ENCODE measurements at regions of chr20 and their contacts with region 1.

Region 1: DNA sequence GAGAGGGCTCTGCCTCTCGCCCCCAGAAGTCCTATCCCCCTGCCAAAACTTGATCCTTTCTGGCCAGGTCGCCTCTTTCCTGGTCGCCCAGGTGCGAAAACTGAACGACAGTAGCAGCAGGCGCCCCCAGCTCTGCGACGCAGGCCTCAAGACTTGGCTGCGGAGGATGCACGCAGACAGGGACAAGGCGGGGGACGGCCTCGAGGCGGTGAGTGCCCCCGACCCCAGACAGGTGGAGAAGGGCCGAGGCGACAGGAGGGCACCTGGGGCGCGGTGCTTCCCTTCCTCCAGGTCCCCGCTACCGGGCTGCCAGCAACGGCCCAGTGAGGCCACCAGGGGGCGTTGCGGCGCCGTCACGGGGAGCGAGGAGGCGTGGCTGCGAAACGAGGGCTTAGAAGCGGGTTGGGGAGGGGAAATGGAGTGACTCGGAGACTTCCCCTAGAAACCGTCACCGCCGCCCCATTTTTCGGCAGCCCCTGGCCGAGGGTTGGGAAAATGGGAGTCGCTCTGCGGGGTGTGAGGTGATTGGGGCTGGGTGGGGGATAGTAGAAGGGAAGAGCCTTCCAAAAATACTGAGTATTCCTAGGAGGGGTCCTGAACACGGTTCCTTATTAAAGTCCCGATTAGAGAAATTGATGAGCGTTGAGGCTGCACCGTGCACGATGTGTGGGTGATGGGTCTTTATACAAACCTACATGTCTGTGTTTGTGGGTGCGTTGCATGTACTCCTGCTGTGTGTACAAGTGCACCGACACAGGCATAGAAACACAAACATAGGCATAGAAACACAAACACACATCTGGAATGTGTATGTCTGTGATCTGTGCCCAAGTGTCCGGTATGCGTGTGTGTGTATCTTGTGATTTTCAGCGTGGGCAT is 44.6 kb downstream of the ARHGAP40 start:
- DNase-seq: peak; percentile 84 to 91 (median 88)
- H3K4me3 ChIP-seq: peak overlapping the region in 1 of 2 donors; percentile 39
- H3K4me3 Mint-ChIP-seq: peak overlapping the region; percentile 67 to 87 (median 82)
- H3K27ac ChIP-seq: no peak overlapping the region
- H3K27ac Mint-ChIP-seq: peak overlapping the region in 6 of 7 donors; percentile 52 to 88 (median 75)
- H3K4me1 ChIP-seq: peaks cover 11% of the 10 kb centered on the region
- H3K4me1 Mint-ChIP-seq: peaks cover 5 to 8% (median 7%) of the 10 kb centered on the region in 4 donors
- H3K27me3 ChIP-seq: peaks cover 9% of the 10 kb centered on the region
- H3K27me3 Mint-ChIP-seq: peaks cover 24 to 36% of the 10 kb centered on the region in 2 donors

Region 2: GRCh38 chr20:38412877-38413577 is 233.2 kb before region 1 on chr20:
- CTCF ChIA-PET with region 1: no interaction called
- POLR2A ChIA-PET with region 1: no interaction called
- intact Hi-C with region 1: no loop called
- DNase-seq: no peak
- H3K4me3 ChIP-seq: no peak overlapping the region
- H3K4me3 Mint-ChIP-seq: peak overlapping the region in 1 of 8 donors; percentile 36
- H3K27ac ChIP-seq: no peak overlapping the region
- H3K27ac Mint-ChIP-seq: no peak overlapping the region
- H3K4me1 ChIP-seq: no peaks in the 10 kb centered on the region
- H3K4me1 Mint-ChIP-seq: no peaks in the 10 kb centered on the region
- H3K27me3 ChIP-seq: no peaks in the 10 kb centered on the region
- H3K27me3 Mint-ChIP-seq: no peaks in the 10 kb centered on the region

Region 3: GRCh38 chr20:38658879-38659596 is 12.8 kb after region 1 on chr20:
- CTCF ChIA-PET with region 1: interaction called, 11 read pairs
- POLR2A ChIA-PET with region 1: no interaction called
- intact Hi-C with region 1: no loop called
- DNase-seq: peak in 4 of 5 donors; percentile 22 to 36 (median 26)
- H3K4me3 ChIP-seq: no peak overlapping the region
- H3K4me3 Mint-ChIP-seq: no peak overlapping the region
- H3K27ac ChIP-seq: no peak overlapping the region
- H3K27ac Mint-ChIP-seq: peak overlapping the region in 1 of 7 donors; percentile 53
- H3K4me1 ChIP-seq: no peaks in the 10 kb centered on the region
- H3K4me1 Mint-ChIP-seq: peaks cover 0 to 3% (median under 1%) of the 10 kb centered on the region in 4 donors
- H3K27me3 ChIP-seq: no peaks in the 10 kb centered on the region
- H3K27me3 Mint-ChIP-seq: peaks cover 21 to 39% of the 10 kb centered on the region in 2 donors

Region 4: DNA sequence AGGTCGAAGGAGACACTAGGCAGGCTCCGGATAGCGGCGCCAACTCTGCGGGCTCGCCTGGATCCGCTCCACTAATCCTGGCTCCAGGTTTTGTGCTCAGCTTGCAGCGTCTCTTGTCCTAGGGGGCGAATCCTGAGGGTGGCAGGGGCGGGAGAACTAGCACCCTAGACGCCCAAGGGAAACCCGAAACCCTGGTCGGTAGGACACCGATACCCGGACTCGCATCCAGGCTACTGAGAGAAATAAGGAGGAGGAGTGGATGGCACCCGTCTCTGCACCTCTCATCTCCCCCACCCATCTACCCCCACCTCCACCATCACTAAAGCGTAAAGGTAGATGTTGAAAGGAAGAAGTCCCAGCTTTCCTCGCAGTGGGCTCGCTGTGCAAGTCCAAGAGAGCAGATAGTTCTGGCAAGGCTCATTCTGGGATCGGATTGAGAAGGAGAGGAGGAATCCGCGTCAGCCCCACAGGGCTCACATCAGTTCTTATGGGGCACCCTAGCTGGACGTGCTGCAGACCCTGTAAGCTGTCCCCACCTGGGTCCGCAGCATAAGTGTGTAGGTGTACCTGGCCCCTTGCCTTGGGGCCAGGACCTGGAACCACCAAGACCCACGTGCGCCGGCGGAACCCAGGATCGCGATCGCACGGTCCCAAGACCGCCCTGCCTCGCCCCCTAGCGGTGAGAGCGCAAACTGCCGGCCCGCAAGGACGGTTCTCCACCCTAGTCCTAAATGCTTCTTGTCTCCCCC is 84.9 kb after region 1 on chr20:
- CTCF ChIA-PET with region 1: interaction called, 3 read pairs
- POLR2A ChIA-PET with region 1: no interaction called
- intact Hi-C with region 1: loop called (anchors 1 kb)
- DNase-seq: peak; percentile 66 to 74 (median 71)
- H3K4me3 ChIP-seq: peak overlapping the region; percentile 44 to 75
- H3K4me3 Mint-ChIP-seq: peak overlapping the region; percentile 61 to 85 (median 73)
- H3K27ac ChIP-seq: no peak overlapping the region
- H3K27ac Mint-ChIP-seq: peak overlapping the region in 5 of 7 donors; percentile 11 to 94 (median 68)
- H3K4me1 ChIP-seq: peaks cover 46% of the 10 kb centered on the region
- H3K4me1 Mint-ChIP-seq: peaks cover 33 to 52% (median 44%) of the 10 kb centered on the region in 4 donors
- H3K27me3 ChIP-seq: peaks cover 74% of the 10 kb centered on the region
- H3K27me3 Mint-ChIP-seq: peaks cover 67 to 85% of the 10 kb centered on the region in 2 donors

Region 5: GRCh38 chr20:38926142-38926933 is 280.1 kb after region 1 on chr20 and contains the start of gene FAM83D:
- CTCF ChIA-PET with region 1: interaction called, 3 read pairs
- POLR2A ChIA-PET with region 1: no interaction called
- intact Hi-C with region 1: loop called (anchors 1 kb)
- DNase-seq: peak; percentile 93 to 96 (median 95)
- H3K4me3 ChIP-seq: peak within 1 kb of the TSS; percentile 57 to 70
- H3K4me3 Mint-ChIP-seq: peak within 1 kb of the TSS; percentile 81 to 87 (median 82)
- H3K27ac ChIP-seq: peak within 1 kb of the TSS; percentile 51
- H3K27ac Mint-ChIP-seq: peak within 1 kb of the TSS; percentile 32 to 93 (median 66)
- H3K4me1 ChIP-seq: peaks cover 33% of the 10 kb centered on the region
- H3K4me1 Mint-ChIP-seq: peaks cover 21 to 37% (median 27%) of the 10 kb centered on the region in 4 donors
- H3K27me3 ChIP-seq: no peaks in the 10 kb centered on the region
- H3K27me3 Mint-ChIP-seq: no peaks in the 10 kb centered on the region
- total RNA-seq, gene FAM83D: 1.4 to 1.5 TPM

Region 6: GRCh38 chr20:38935285-38935684 is 289.1 kb after region 1 on chr20:
- CTCF ChIA-PET with region 1: no interaction called
- POLR2A ChIA-PET with region 1: no interaction called
- intact Hi-C with region 1: loop called (anchors 2 kb)
- DNase-seq: no peak
- H3K4me3 ChIP-seq: no peak overlapping the region
- H3K4me3 Mint-ChIP-seq: no peak overlapping the region
- H3K27ac ChIP-seq: no peak overlapping the region
- H3K27ac Mint-ChIP-seq: peak overlapping the region in 1 of 7 donors; percentile 10
- H3K4me1 ChIP-seq: peaks cover under 1% of the 10 kb centered on the region
- H3K4me1 Mint-ChIP-seq: peaks cover 0 to 2% (median 0%) of the 10 kb centered on the region in 4 donors
- H3K27me3 ChIP-seq: no peaks in the 10 kb centered on the region
- H3K27me3 Mint-ChIP-seq: no peaks in the 10 kb centered on the region

Region 7: GRCh38 chr20:38962044-38962927 is 316.1 kb after region 1 on chr20 and contains the start of gene DHX35:
- CTCF ChIA-PET with region 1: interaction called, 25 read pairs
- POLR2A ChIA-PET with region 1: interaction called, 4 read pairs
- intact Hi-C with region 1: loop called (anchors 1 kb)
- DNase-seq: peak; percentile 98 to 99 (median 98)
- H3K4me3 ChIP-seq: peak within 1 kb of the TSS; percentile 86 to 98
- H3K4me3 Mint-ChIP-seq: peak within 1 kb of the TSS; percentile 88 to 98 (median 96)
- H3K27ac ChIP-seq: peak within 1 kb of the TSS; percentile 76
- H3K27ac Mint-ChIP-seq: peak within 1 kb of the TSS; percentile 90 to 98 (median 96)
- H3K4me1 ChIP-seq: peaks cover 24% of the 10 kb centered on the region
- H3K4me1 Mint-ChIP-seq: peaks cover 12 to 31% (median 25%) of the 10 kb centered on the region in 4 donors
- H3K27me3 ChIP-seq: no peaks in the 10 kb centered on the region
- H3K27me3 Mint-ChIP-seq: no peaks in the 10 kb centered on the region
- total RNA-seq, gene DHX35: 11.5 to 11.8 TPM

Measured in CD4-positive, alpha-beta memory T cell (primary cell).